HEK293 (cell line): ENCODE measurements at regions of chr6 and their contacts with region 1.

Region 1: GRCh38 chr6:40328405-40328987 is 258.7 kb downstream of the LRFN2 start:
- H3K4me3 ChIP-seq: no peak overlapping the region
- H3K27ac ChIP-seq: no peak overlapping the region
- H3K4me1 ChIP-seq: peaks cover 6% of the 10 kb centered on the region; the same call in 1 of the 2 replicates
- CTCF ChIP-seq: peak; percentile 69

Region 2: GRCh38 chr6:40315060-40315459 is 13.4 kb before region 1 on chr6:
- CTCF ChIA-PET with region 1: interaction called, 12 read pairs
- POLR2A ChIA-PET with region 1: no interaction called
- H3K4me3 ChIP-seq: no peak overlapping the region
- H3K27ac ChIP-seq: no peak overlapping the region
- H3K4me1 ChIP-seq: no peaks in the 10 kb centered on the region
- CTCF ChIP-seq: no peak

Region 3: DNA sequence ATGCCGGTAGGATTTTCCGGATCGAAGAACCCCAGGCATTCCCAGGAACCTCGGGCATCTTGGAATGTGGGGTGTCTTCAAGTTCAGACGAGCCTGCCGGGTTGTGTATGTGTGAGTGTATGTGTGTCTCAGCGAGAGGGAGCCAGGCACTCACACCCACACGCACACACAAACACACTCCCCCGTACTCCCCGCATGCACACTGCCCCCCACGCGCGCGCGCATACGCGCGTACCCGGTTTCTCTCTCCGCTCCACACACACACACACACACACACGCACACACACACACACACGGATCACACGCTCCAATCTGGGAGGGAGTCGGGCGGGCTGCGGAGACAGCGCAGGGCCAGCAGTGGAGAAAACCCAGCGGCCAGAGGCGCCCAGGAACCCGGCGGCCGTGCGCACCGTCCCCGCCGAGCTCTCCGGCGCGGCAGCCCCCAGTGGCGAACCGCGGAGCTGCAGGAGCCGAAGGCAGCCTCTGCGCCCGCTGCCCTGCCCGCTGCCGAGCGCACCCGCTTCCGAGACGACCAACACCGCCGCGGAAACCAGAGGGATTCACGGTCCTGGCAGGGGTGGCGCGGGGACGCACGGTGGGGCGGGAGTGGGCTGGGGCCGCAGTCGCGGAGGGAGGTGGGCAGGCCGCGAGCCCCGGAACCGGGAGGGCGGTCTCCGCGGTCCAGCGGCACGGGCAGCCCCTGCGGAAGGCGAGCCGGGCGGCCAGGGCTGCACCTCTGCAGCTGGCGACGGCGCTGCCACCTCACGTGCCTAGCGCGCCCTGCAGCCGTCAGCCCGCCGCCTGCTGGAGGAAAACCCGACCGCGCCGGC is 259.0 kb after region 1 on chr6 and contains the start of gene LRFN2:
- CTCF ChIA-PET with region 1: interaction called, 12 read pairs
- POLR2A ChIA-PET with region 1: no interaction called
- H3K4me3 ChIP-seq: peak within 1 kb of the TSS; percentile 55
- H3K27ac ChIP-seq: no peak within 1 kb of the TSS; the same call in 1 of the 2 replicates
- H3K4me1 ChIP-seq: no peaks in the 10 kb centered on the region; the same call in 1 of the 2 replicates
- CTCF ChIP-seq: peak; percentile 92

Region 4: GRCh38 chr6:40804905-40805304 is 476.4 kb after region 1 on chr6:
- CTCF ChIA-PET with region 1: interaction called, 21 read pairs
- POLR2A ChIA-PET with region 1: no interaction called
- H3K4me3 ChIP-seq: no peak overlapping the region
- H3K27ac ChIP-seq: no peak overlapping the region
- H3K4me1 ChIP-seq: no peaks in the 10 kb centered on the region
- CTCF ChIP-seq: no peak

Region 5: GRCh38 chr6:40845553-40845952 is 517.1 kb after region 1 on chr6:
- CTCF ChIA-PET with region 1: interaction called, 26 read pairs
- POLR2A ChIA-PET with region 1: no interaction called
- H3K4me3 ChIP-seq: no peak overlapping the region
- H3K27ac ChIP-seq: no peak overlapping the region
- H3K4me1 ChIP-seq: peaks cover 3% of the 10 kb centered on the region; the same call in 1 of the 2 replicates
- CTCF ChIP-seq: no peak